ENCODE measurements at regions of chr18 and their contacts with region 1.

Region 1: DNA sequence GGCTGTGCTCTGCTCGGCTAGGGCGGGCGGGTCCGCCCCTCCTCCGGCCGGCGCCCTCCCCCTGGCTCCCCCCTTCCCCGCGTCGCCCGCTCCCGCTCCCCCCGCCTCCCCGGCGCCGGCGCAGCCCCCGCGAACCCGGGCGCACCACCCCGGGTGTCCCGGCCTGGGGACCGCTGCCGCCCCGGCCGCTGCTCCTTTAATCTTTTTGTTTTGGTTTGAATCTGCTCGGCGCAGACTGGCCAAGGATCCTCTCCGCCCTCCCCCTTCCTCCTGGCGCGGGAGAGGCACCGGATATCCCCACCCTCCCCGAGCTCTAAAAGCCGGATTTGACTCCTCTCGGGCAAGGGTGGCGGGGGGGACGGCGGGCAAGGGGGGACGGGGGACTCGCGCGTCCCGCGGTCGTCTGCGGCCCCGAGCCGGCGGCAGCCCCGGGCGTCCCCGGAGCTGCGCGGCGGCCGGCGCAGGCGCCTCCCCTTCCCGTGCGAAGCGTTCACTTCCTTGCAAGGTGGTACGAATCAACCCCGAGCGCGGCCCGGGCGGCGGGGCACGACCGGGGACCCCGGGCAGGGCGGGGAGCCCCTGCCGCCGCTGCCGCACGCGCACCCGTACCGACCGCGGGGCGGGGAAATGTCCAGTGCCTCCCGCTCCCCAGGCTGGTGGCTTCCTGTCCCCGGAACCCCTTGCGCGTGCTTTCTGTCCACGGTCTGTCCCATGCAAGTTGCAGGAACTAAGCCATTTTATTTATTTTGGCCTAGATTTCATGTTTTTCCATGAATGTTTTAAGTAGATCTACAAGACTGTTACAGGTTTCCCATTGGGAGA is at the start of gene PTGR3:
- DNase-seq: peak; percentile 51 to 92 (median 70)
- ATAC-seq: peak; percentile 48
- H3K4me3 ChIP-seq: peak within 1 kb of the TSS; percentile 98
- H3K4me3 Mint-ChIP-seq: peak within 1 kb of the TSS; percentile 98
- H3K27ac ChIP-seq: peak within 1 kb of the TSS; percentile 78 to 81
- H3K27ac Mint-ChIP-seq: peak within 1 kb of the TSS; percentile 99
- H3K4me1 ChIP-seq: peaks cover 43% of the 10 kb centered on the region
- H3K4me1 Mint-ChIP-seq: peaks cover 66% of the 10 kb centered on the region
- H3K27me3 ChIP-seq: no peaks in the 10 kb centered on the region
- H3K27me3 Mint-ChIP-seq: no peaks in the 10 kb centered on the region
- CTCF ChIP-seq: no peak
- total RNA-seq, gene PTGR3: 14.1 to 14.3 TPM

Region 2: GRCh38 chr18:74370115-74370514 is 839.2 kb before region 1 on chr18:
- CTCF ChIA-PET with region 1: no interaction called
- POLR2A ChIA-PET with region 1: no interaction called
- intact Hi-C with region 1: loop called in 1 of 2 experiments (anchors 10 kb)
- DNase-seq: no peak
- ATAC-seq: no peak
- H3K4me3 ChIP-seq: no peak overlapping the region
- H3K4me3 Mint-ChIP-seq: no peak overlapping the region
- H3K27ac ChIP-seq: no peak overlapping the region
- H3K27ac Mint-ChIP-seq: no peak overlapping the region
- H3K4me1 ChIP-seq: peaks cover 31% of the 10 kb centered on the region
- H3K4me1 Mint-ChIP-seq: peaks cover 46% of the 10 kb centered on the region
- H3K27me3 ChIP-seq: no peaks in the 10 kb centered on the region
- H3K27me3 Mint-ChIP-seq: no peaks in the 10 kb centered on the region
- CTCF ChIP-seq: no peak

Region 3: GRCh38 chr18:74597662-74598349 is 611.5 kb before region 1 on chr18 and contains the start of gene ZNF407:
- CTCF ChIA-PET with region 1: no interaction called
- POLR2A ChIA-PET with region 1: interaction called, 23 read pairs
- intact Hi-C with region 1: loop called (anchors 2 to 5 kb)
- DNase-seq: peak; percentile 75 to 93 (median 83)
- ATAC-seq: peak; percentile 76
- H3K4me3 ChIP-seq: peak within 1 kb of the TSS; percentile 87
- H3K4me3 Mint-ChIP-seq: peak within 1 kb of the TSS; percentile 98
- H3K27ac ChIP-seq: peak within 1 kb of the TSS; percentile 96 to 98
- H3K27ac Mint-ChIP-seq: peak within 1 kb of the TSS; percentile 100
- H3K4me1 ChIP-seq: peaks cover 25% of the 10 kb centered on the region
- H3K4me1 Mint-ChIP-seq: peaks cover 71% of the 10 kb centered on the region
- H3K27me3 ChIP-seq: no peaks in the 10 kb centered on the region
- H3K27me3 Mint-ChIP-seq: no peaks in the 10 kb centered on the region
- CTCF ChIP-seq: no peak
- total RNA-seq, gene ZNF407: 23.2 to 24.7 TPM

Region 4: DNA sequence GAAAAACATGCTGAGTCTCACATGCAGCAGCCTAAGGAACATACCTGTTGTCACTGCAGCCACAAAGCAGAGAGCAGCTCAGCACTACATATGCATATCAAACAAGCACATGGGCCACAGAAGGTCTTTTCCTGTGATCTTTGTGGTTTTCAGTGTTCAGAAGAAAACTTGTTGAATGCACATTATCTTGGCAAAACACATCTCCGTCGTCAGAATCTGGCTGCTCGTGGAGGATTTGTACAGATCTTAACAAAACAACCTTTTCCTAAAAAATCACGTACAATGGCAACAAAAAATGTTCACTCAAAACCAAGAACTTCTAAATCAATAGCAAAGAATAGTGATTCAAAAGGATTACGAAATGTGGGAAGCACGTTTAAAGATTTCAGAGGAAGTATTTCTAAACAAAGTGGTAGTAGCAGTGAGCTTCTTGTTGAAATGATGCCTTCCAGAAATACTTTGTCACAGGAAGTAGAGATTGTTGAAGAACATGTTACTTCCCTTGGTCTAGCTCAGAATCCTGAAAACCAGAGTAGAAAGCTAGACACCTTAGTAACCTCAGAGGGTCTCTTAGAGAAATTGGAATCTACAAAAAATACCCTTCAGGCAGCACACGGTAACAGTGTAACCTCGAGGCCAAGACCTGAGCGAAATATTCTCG is 577.6 kb before region 1 on chr18:
- CTCF ChIA-PET with region 1: no interaction called
- POLR2A ChIA-PET with region 1: interaction called, 17 read pairs
- intact Hi-C with region 1: loop called in 1 of 2 experiments (anchors 10 kb)
- DNase-seq: peak in 9 of 14 experiments; percentile 1 to 61 (median 36)
- ATAC-seq: peak; percentile 90
- H3K4me3 ChIP-seq: peak overlapping the region; percentile 34
- H3K4me3 Mint-ChIP-seq: peak overlapping the region; percentile 81
- H3K27ac ChIP-seq: peak overlapping the region; percentile 13 to 66
- H3K27ac Mint-ChIP-seq: peak overlapping the region; percentile 90
- H3K4me1 ChIP-seq: peaks cover 27% of the 10 kb centered on the region
- H3K4me1 Mint-ChIP-seq: peaks cover 59% of the 10 kb centered on the region
- H3K27me3 ChIP-seq: no peaks in the 10 kb centered on the region
- H3K27me3 Mint-ChIP-seq: no peaks in the 10 kb centered on the region
- CTCF ChIP-seq: no peak

Region 5: DNA sequence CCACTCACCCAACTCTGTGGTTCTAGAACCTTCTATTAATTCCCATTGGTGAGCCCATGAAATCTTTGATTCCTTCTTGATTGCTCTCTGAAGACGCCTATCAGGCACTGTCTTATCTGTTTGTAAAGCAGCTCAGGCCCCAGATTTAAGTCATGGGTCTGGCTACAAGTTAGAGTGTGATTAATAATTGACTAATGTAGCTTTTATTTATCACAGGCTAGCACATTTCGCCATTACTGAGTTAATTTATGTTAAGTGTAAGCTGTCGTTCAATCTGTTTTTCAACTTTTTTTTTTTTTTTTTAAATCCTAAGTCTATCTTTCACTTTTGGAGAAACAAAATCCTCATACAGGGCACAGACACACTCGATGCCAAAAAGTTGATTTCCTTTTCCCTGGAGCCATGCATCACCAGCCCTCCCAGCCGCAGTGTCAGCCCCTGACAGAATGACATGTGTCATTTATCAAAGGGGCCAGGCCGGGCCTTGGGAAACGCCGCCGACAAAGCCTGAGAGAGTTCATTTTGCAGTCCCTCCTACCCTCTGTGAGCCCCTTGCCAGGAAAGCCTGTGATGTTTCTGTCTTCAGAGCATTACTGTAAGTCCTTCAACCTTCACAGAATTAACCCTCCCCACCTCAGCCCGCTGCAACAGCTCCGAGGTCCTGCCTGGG is 17.1 kb after region 1 on chr18:
- CTCF ChIA-PET with region 1: interaction called, 4 read pairs
- POLR2A ChIA-PET with region 1: interaction called, 13 read pairs
- intact Hi-C with region 1: no loop called
- DNase-seq: no peak
- ATAC-seq: peak; percentile 45
- H3K4me3 ChIP-seq: no peak overlapping the region
- H3K4me3 Mint-ChIP-seq: peak overlapping the region; percentile 32
- H3K27ac ChIP-seq: no peak overlapping the region
- H3K27ac Mint-ChIP-seq: peak overlapping the region; percentile 25
- H3K4me1 ChIP-seq: peaks cover 52% of the 10 kb centered on the region
- H3K4me1 Mint-ChIP-seq: peaks cover 83% of the 10 kb centered on the region
- H3K27me3 ChIP-seq: no peaks in the 10 kb centered on the region
- H3K27me3 Mint-ChIP-seq: no peaks in the 10 kb centered on the region
- CTCF ChIP-seq: no peak

Region 6: GRCh38 chr18:76005632-76006208 is 796.4 kb after region 1 on chr18:
- CTCF ChIA-PET with region 1: no interaction called
- POLR2A ChIA-PET with region 1: no interaction called
- intact Hi-C with region 1: no loop called
- DNase-seq: no peak
- ATAC-seq: no peak
- H3K4me3 ChIP-seq: no peak overlapping the region
- H3K4me3 Mint-ChIP-seq: no peak overlapping the region
- H3K27ac ChIP-seq: no peak overlapping the region
- H3K27ac Mint-ChIP-seq: no peak overlapping the region
- H3K4me1 ChIP-seq: no peaks in the 10 kb centered on the region
- H3K4me1 Mint-ChIP-seq: no peaks in the 10 kb centered on the region
- H3K27me3 ChIP-seq: no peaks in the 10 kb centered on the region
- H3K27me3 Mint-ChIP-seq: no peaks in the 10 kb centered on the region
- CTCF ChIP-seq: no peak

Region 7: GRCh38 chr18:76492669-76493212 is 1283.4 kb after region 1 on chr18:
- CTCF ChIA-PET with region 1: no interaction called
- POLR2A ChIA-PET with region 1: no interaction called
- intact Hi-C with region 1: loop called in 1 of 2 experiments (anchors 5 kb)
- DNase-seq: peak; percentile 96 to 100 (median 98)
- ATAC-seq: peak; percentile 68
- H3K4me3 ChIP-seq: peak overlapping the region; percentile 60
- H3K4me3 Mint-ChIP-seq: peak overlapping the region; percentile 95
- H3K27ac ChIP-seq: peak overlapping the region in 1 of 2 donors; percentile 37
- H3K27ac Mint-ChIP-seq: peak overlapping the region; percentile 82
- H3K4me1 ChIP-seq: peaks cover 36% of the 10 kb centered on the region
- H3K4me1 Mint-ChIP-seq: peaks cover 65% of the 10 kb centered on the region
- H3K27me3 ChIP-seq: peaks cover 13 to 24% of the 10 kb centered on the region in 2 experiments
- H3K27me3 Mint-ChIP-seq: peaks cover 82% of the 10 kb centered on the region
- CTCF ChIP-seq: no peak